Activated B cell treated with CpG ODN at 0.5 μM for 24 hours (primary cell): ENCODE measurements at regions of chr4 and their contacts with region 1.

Region 1: GRCh38 chr4:14309431-14309830 is 681.9 kb upstream of the BOD1L1 start:
- DNase-seq: no peak
- ATAC-seq: no peak
- H3K4me3 Mint-ChIP-seq: no peak overlapping the region
- H3K27ac Mint-ChIP-seq: no peak overlapping the region
- H3K4me1 Mint-ChIP-seq: peaks cover 27% of the 10 kb centered on the region
- H3K27me3 Mint-ChIP-seq: no peaks in the 10 kb centered on the region
- CTCF ChIP-seq: no peak

Region 2: DNA sequence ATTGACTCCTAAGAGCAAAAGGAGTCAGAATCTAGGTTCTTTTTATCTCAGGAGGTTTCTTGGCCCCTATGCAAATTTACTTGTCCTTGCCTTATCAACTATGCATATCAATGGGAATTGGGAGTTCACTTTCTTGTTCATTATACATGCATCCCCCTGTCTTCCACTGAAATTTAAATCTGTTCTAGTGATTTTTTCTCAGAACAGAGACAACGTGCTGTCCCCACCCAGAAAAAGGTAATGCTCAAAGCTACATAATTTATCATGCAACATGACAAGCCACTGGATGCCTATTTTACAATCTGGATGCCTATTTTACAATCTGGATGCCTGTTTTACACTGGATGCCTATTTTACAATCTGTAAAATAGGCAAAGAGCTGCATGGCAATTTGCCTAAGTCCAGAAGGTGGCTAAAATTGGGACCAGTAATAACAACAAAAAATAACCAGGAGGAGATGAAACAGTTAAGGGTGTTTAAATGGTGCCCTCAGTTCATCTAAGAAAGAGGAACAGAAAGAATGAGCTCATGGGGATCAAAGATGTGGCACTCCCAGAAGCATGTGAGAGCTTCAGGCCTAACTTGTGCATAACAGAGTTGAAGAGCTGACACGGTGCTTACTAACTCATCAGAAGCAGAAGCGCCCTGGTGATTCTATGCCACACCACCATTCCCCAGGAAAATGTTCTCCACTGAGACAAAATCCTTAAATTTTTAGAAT is 144.0 kb before region 1 on chr4:
- CTCF ChIA-PET with region 1: no interaction called
- POLR2A ChIA-PET with region 1: interaction called, 9 read pairs
- intact Hi-C with region 1: loop called (anchors 1 kb)
- DNase-seq: no peak
- ATAC-seq: peak; percentile 99
- H3K4me3 Mint-ChIP-seq: peak overlapping the region; percentile 69
- H3K27ac Mint-ChIP-seq: peak overlapping the region; percentile 86
- H3K4me1 Mint-ChIP-seq: peaks cover 31% of the 10 kb centered on the region
- H3K27me3 Mint-ChIP-seq: no peaks in the 10 kb centered on the region
- CTCF ChIP-seq: no peak

Region 3: GRCh38 chr4:14267373-14268060 is 41.9 kb before region 1 on chr4:
- CTCF ChIA-PET with region 1: no interaction called
- POLR2A ChIA-PET with region 1: interaction called, 10 read pairs
- intact Hi-C with region 1: no loop called
- DNase-seq: no peak
- ATAC-seq: no peak
- H3K4me3 Mint-ChIP-seq: no peak overlapping the region
- H3K27ac Mint-ChIP-seq: no peak overlapping the region
- H3K4me1 Mint-ChIP-seq: peaks cover 27% of the 10 kb centered on the region
- H3K27me3 Mint-ChIP-seq: no peaks in the 10 kb centered on the region
- CTCF ChIP-seq: no peak

Region 4: GRCh38 chr4:14294611-14295010 is 14.8 kb before region 1 on chr4:
- CTCF ChIA-PET with region 1: no interaction called
- POLR2A ChIA-PET with region 1: interaction called, 12 read pairs
- intact Hi-C with region 1: no loop called
- DNase-seq: no peak
- ATAC-seq: no peak
- H3K4me3 Mint-ChIP-seq: no peak overlapping the region
- H3K27ac Mint-ChIP-seq: no peak overlapping the region
- H3K4me1 Mint-ChIP-seq: no peaks in the 10 kb centered on the region
- H3K27me3 Mint-ChIP-seq: no peaks in the 10 kb centered on the region
- CTCF ChIP-seq: no peak

Region 5: GRCh38 chr4:14596904-14597303 is 287.5 kb after region 1 on chr4:
- CTCF ChIA-PET with region 1: no interaction called
- POLR2A ChIA-PET with region 1: no interaction called
- intact Hi-C with region 1: no loop called
- DNase-seq: no peak
- ATAC-seq: no peak
- H3K4me3 Mint-ChIP-seq: no peak overlapping the region
- H3K27ac Mint-ChIP-seq: no peak overlapping the region
- H3K4me1 Mint-ChIP-seq: peaks cover 6% of the 10 kb centered on the region
- H3K27me3 Mint-ChIP-seq: no peaks in the 10 kb centered on the region
- CTCF ChIP-seq: no peak